Activated CD8-positive, alpha-beta memory T cell treated with anti-CD3 and anti-CD28 coated beads, Interleukin-2, amount 10 ng/mL, durations not matched to agents 7 days and 5 days (primary cell): ENCODE measurements at regions of chr10 and their contacts with region 1.

Region 1: GRCh38 chr10:114470956-114471905 is 66.9 kb upstream of the AFAP1L2 start:
- DNase-seq: peak; percentile 76
- ATAC-seq: peak; percentile 89
- H3K4me3 Mint-ChIP-seq: no peak overlapping the region
- H3K27ac Mint-ChIP-seq: peak overlapping the region; percentile 52
- H3K4me1 Mint-ChIP-seq: peaks cover 14% of the 10 kb centered on the region
- H3K27me3 Mint-ChIP-seq: no peaks in the 10 kb centered on the region

Region 2: GRCh38 chr10:114304017-114304570 is 167.1 kb before region 1 on chr10:
- CTCF ChIA-PET with region 1: interaction called, 36 read pairs
- DNase-seq: peak; percentile 88
- ATAC-seq: peak; percentile 70
- H3K4me3 Mint-ChIP-seq: peak overlapping the region; percentile 81
- H3K27ac Mint-ChIP-seq: peak overlapping the region; percentile 84
- H3K4me1 Mint-ChIP-seq: peaks cover 10% of the 10 kb centered on the region
- H3K27me3 Mint-ChIP-seq: no peaks in the 10 kb centered on the region

Region 3: GRCh38 chr10:114394531-114394930 is 76.7 kb before region 1 on chr10:
- CTCF ChIA-PET with region 1: no interaction called
- DNase-seq: no peak
- ATAC-seq: no peak
- H3K4me3 Mint-ChIP-seq: no peak overlapping the region
- H3K27ac Mint-ChIP-seq: no peak overlapping the region
- H3K4me1 Mint-ChIP-seq: no peaks in the 10 kb centered on the region
- H3K27me3 Mint-ChIP-seq: peaks cover 71% of the 10 kb centered on the region

Region 4: GRCh38 chr10:114427124-114427852 is 43.9 kb before region 1 on chr10:
- CTCF ChIA-PET with region 1: no interaction called
- DNase-seq: no peak
- ATAC-seq: no peak
- H3K4me3 Mint-ChIP-seq: no peak overlapping the region
- H3K27ac Mint-ChIP-seq: no peak overlapping the region
- H3K4me1 Mint-ChIP-seq: no peaks in the 10 kb centered on the region
- H3K27me3 Mint-ChIP-seq: peaks cover 4% of the 10 kb centered on the region

Region 5: GRCh38 chr10:114486938-114487814 is 15.9 kb after region 1 on chr10:
- CTCF ChIA-PET with region 1: interaction called, 18 read pairs
- DNase-seq: no peak
- ATAC-seq: peak; percentile 30
- H3K4me3 Mint-ChIP-seq: no peak overlapping the region
- H3K27ac Mint-ChIP-seq: no peak overlapping the region
- H3K4me1 Mint-ChIP-seq: peaks cover 24% of the 10 kb centered on the region
- H3K27me3 Mint-ChIP-seq: no peaks in the 10 kb centered on the region

Region 6: DNA sequence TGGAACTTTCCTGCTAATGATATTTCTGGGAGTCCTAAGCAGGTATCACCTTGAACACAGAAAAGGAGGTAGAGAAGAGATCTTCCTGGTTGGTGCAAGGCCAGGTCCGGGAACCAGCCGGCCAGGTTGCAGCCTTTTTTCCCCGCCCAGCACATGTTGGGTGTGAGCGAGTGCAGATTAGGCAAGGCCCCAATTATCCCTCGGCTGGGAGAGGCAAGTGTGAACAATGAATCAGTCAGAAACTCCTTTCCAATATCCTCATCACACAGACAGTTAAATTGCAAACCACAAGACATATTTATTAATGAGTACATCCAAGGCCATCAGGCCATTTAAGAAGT is 48.0 kb after region 1 on chr10:
- CTCF ChIA-PET with region 1: interaction called, 40 read pairs
- DNase-seq: no peak
- ATAC-seq: no peak
- H3K4me3 Mint-ChIP-seq: no peak overlapping the region
- H3K27ac Mint-ChIP-seq: no peak overlapping the region
- H3K4me1 Mint-ChIP-seq: peaks cover 62% of the 10 kb centered on the region
- H3K27me3 Mint-ChIP-seq: no peaks in the 10 kb centered on the region

Region 7: GRCh38 chr10:114541081-114541796 is 70.0 kb after region 1 on chr10:
- CTCF ChIA-PET with region 1: interaction called, 93 read pairs
- DNase-seq: peak; percentile 92
- ATAC-seq: peak; percentile 84
- H3K4me3 Mint-ChIP-seq: peak overlapping the region; percentile 40
- H3K27ac Mint-ChIP-seq: peak overlapping the region; percentile 100
- H3K4me1 Mint-ChIP-seq: peaks cover 82% of the 10 kb centered on the region
- H3K27me3 Mint-ChIP-seq: no peaks in the 10 kb centered on the region

Region 8: GRCh38 chr10:114703377-114704107 is 232.3 kb after region 1 on chr10:
- CTCF ChIA-PET with region 1: interaction called, 11 read pairs
- DNase-seq: no peak
- ATAC-seq: peak; percentile 42
- H3K4me3 Mint-ChIP-seq: no peak overlapping the region
- H3K27ac Mint-ChIP-seq: no peak overlapping the region
- H3K4me1 Mint-ChIP-seq: no peaks in the 10 kb centered on the region
- H3K27me3 Mint-ChIP-seq: peaks cover 53% of the 10 kb centered on the region